GM12878 (cell line): ENCODE measurements at regions of chr3 and their contacts with region 1.

Region 1: GRCh38 chr3:122508135-122508914 is 6.4 kb downstream of the KPNA1 start:
- DNase-seq: no peak
- ATAC-seq: peak; percentile 61
- H3K4me3 ChIP-seq: peak overlapping the region; percentile 28
- H3K27ac ChIP-seq: peak overlapping the region; percentile 2
- H3K4me1 ChIP-seq: peaks cover 6% of the 10 kb centered on the region; the same call in 1 of the 2 replicates
- H3K27me3 ChIP-seq: no peaks in the 10 kb centered on the region
- CTCF ChIP-seq: no peak
- EP300 ChIP-seq: no peak
- POLR2A ChIP-seq: no peak
- RAD21 ChIP-seq: no peak

Region 2: DNA sequence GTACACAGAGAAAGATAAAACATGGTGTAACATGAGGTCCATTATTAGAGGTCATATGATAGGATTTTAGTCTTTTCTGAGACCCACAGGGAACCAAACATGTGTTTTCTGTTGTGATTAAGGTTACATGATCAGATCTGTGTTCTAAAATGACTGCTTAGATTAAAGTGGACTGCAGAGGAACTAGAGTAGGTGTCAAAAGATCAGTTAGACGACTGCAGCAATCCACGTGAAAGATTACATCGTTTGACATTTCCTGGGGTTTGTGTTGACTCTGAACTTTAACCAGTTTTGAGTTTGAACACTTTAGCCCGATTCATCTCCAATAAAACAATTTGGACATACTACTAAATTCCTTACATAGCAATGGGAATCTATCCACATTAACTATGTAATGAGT is 130.3 kb before region 1 on chr3:
- CTCF ChIA-PET with region 1: no interaction called
- POLR2A ChIA-PET with region 1: no interaction called
- RAD21 ChIA-PET with region 1: no interaction called
- SMC1A ChIA-PET with region 1: no interaction called
- in situ Hi-C with region 1: no loop called
- intact Hi-C with region 1: no loop called
- DNase-seq: no peak
- ATAC-seq: no peak
- H3K4me3 ChIP-seq: no peak overlapping the region
- H3K27ac ChIP-seq: no peak overlapping the region
- H3K4me1 ChIP-seq: peaks cover 11% of the 10 kb centered on the region
- H3K27me3 ChIP-seq: no peaks in the 10 kb centered on the region
- CTCF ChIP-seq: no peak
- EP300 ChIP-seq: no peak
- POLR2A ChIP-seq: no peak
- RAD21 ChIP-seq: no peak

Region 3: GRCh38 chr3:122468896-122469533 is 39.3 kb before region 1 on chr3:
- CTCF ChIA-PET with region 1: interaction called, 7 read pairs
- POLR2A ChIA-PET with region 1: interaction called, 9 read pairs
- RAD21 ChIA-PET with region 1: interaction called, 6 read pairs
- SMC1A ChIA-PET with region 1: interaction called, 31 read pairs
- in situ Hi-C with region 1: no loop called
- intact Hi-C with region 1: no loop called
- DNase-seq: peak; percentile 30
- ATAC-seq: peak; percentile 88
- H3K4me3 ChIP-seq: no peak overlapping the region
- H3K27ac ChIP-seq: peak overlapping the region; percentile 53
- H3K4me1 ChIP-seq: peaks cover 16% of the 10 kb centered on the region
- H3K27me3 ChIP-seq: no peaks in the 10 kb centered on the region
- CTCF ChIP-seq: no peak
- EP300 ChIP-seq: no peak; a peak in 1 of 4 replicates
- POLR2A ChIP-seq: no peak
- RAD21 ChIP-seq: no peak

Region 4: GRCh38 chr3:122497425-122497824 is 10.9 kb before region 1 on chr3:
- CTCF ChIA-PET with region 1: interaction called, 13 read pairs
- POLR2A ChIA-PET with region 1: interaction called, 6 read pairs
- RAD21 ChIA-PET with region 1: interaction called, 6 read pairs
- SMC1A ChIA-PET with region 1: interaction called, 27 read pairs
- in situ Hi-C with region 1: no loop called
- intact Hi-C with region 1: no loop called
- DNase-seq: peak; percentile 72
- ATAC-seq: peak; percentile 97
- H3K4me3 ChIP-seq: no peak overlapping the region
- H3K27ac ChIP-seq: peak overlapping the region; percentile 64; the same call in 1 of the 2 replicates
- H3K4me1 ChIP-seq: peaks cover 14% of the 10 kb centered on the region
- H3K27me3 ChIP-seq: no peaks in the 10 kb centered on the region
- CTCF ChIP-seq: no peak
- EP300 ChIP-seq: peak; percentile 24 to 27; a peak in 1 of 4 replicates
- POLR2A ChIP-seq: no peak
- RAD21 ChIP-seq: no peak

Region 5: GRCh38 chr3:122745346-122746021 is 237.2 kb after region 1 on chr3:
- CTCF ChIA-PET with region 1: no interaction called
- POLR2A ChIA-PET with region 1: no interaction called
- RAD21 ChIA-PET with region 1: no interaction called
- SMC1A ChIA-PET with region 1: no interaction called
- in situ Hi-C with region 1: no loop called
- intact Hi-C with region 1: no loop called
- DNase-seq: no peak
- ATAC-seq: no peak
- H3K4me3 ChIP-seq: no peak overlapping the region
- H3K27ac ChIP-seq: no peak overlapping the region
- H3K4me1 ChIP-seq: no peaks in the 10 kb centered on the region
- H3K27me3 ChIP-seq: no peaks in the 10 kb centered on the region
- CTCF ChIP-seq: no peak
- EP300 ChIP-seq: no peak
- POLR2A ChIP-seq: no peak
- RAD21 ChIP-seq: no peak